ENCODE measurements at regions of chr14 and their contacts with region 1.

Region 1: DNA sequence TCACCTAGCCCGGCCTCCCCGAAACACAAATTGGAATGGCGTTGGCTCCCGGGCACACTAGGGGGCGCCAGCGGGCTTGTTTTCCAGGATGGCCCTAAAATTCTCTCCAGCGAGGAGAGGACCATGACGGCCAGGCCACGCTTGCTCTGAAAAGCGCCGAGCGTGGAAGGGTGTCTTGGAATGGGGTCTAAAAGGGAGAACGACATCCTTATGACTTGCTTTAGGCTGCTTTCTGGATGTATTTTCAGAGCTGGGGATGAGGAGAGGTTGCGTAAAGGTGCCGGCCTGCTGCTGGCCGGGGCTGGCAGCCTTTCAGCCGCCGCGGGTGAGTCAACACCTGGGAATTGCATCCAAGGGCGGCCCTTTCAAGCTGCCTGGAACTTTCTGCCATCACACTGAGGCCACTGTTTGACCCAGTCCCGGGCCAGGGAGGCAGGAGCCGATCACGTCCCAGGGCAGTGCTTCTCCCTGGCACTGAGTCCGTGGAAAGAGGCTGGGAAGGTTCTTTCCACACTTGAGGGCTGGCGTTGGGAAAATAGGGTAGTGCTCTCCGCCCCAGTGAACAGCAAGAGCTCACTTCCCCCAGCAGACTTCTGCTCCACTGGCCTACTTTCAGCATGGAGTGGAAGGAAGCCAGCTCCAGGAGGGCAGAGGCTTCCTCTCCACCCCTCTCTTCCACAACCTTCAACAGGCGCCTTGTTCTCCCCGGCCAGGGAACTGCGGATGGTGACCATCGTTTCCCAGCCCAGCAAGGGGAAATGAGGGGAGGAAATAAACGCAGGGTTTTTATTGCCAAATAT is 216.2 kb downstream of the TTC8 start:
- DNase-seq: peak; percentile 59 to 99
- H3K4me3 ChIP-seq: peak overlapping the region in 3 of 4 experiments; percentile 16 to 53 (median 22); a peak in 4 of 8 replicates
- H3K27ac ChIP-seq: no peak overlapping the region; the same call in 1 of the 2 replicates
- H3K4me1 ChIP-seq: peaks cover 0 to 10% (median 7%) of the 10 kb centered on the region in 4 experiments; a peak in 6 of 7 replicates
- H3K27me3 ChIP-seq: no peaks in the 10 kb centered on the region
- CTCF ChIP-seq: peak; percentile 85 to 91 (median 85)
- EP300 ChIP-seq: no peak
- POLR2A ChIP-seq: 0 out of 3 replicates have a peak, but pooled peaks of 1 of the 2 experiments have one; percentile 19
- RAD21 ChIP-seq: peak; percentile 94 to 97

Region 2: GRCh38 chr14:89004166-89004565 is 36.5 kb before region 1 on chr14:
- CTCF ChIA-PET with region 1: no interaction called
- POLR2A ChIA-PET with region 1: no interaction called
- DNase-seq: no peak
- H3K4me3 ChIP-seq: no peak overlapping the region
- H3K27ac ChIP-seq: no peak overlapping the region
- H3K4me1 ChIP-seq: peaks cover 0 to 3% (median 0%) of the 10 kb centered on the region in 4 experiments; a peak in 1 of 7 replicates
- H3K27me3 ChIP-seq: peaks cover 0 to 1% (median 0%) of the 10 kb centered on the region in 4 experiments; a peak in 1 of 7 replicates
- CTCF ChIP-seq: no peak
- EP300 ChIP-seq: no peak
- POLR2A ChIP-seq: no peak
- RAD21 ChIP-seq: no peak

Region 3: GRCh38 chr14:89027097-89027740 is 13.4 kb before region 1 on chr14:
- CTCF ChIA-PET with region 1: interaction called, 21 read pairs
- POLR2A ChIA-PET with region 1: interaction called, 4 read pairs
- DNase-seq: peak in 1 of 2 experiments; percentile 89
- H3K4me3 ChIP-seq: peak overlapping the region; percentile 53 to 84 (median 79)
- H3K27ac ChIP-seq: no peak overlapping the region
- H3K4me1 ChIP-seq: no peaks in the 10 kb centered on the region; a peak in 2 of 7 replicates
- H3K27me3 ChIP-seq: peaks cover 7 to 45% (median 34%) of the 10 kb centered on the region in 4 experiments
- CTCF ChIP-seq: peak; percentile 66 to 88 (median 80)
- EP300 ChIP-seq: peak in 1 of 2 experiments; percentile 28; a peak in 1 of 3 replicates
- POLR2A ChIP-seq: no peak
- RAD21 ChIP-seq: peak; percentile 82 to 92

Region 4: DNA sequence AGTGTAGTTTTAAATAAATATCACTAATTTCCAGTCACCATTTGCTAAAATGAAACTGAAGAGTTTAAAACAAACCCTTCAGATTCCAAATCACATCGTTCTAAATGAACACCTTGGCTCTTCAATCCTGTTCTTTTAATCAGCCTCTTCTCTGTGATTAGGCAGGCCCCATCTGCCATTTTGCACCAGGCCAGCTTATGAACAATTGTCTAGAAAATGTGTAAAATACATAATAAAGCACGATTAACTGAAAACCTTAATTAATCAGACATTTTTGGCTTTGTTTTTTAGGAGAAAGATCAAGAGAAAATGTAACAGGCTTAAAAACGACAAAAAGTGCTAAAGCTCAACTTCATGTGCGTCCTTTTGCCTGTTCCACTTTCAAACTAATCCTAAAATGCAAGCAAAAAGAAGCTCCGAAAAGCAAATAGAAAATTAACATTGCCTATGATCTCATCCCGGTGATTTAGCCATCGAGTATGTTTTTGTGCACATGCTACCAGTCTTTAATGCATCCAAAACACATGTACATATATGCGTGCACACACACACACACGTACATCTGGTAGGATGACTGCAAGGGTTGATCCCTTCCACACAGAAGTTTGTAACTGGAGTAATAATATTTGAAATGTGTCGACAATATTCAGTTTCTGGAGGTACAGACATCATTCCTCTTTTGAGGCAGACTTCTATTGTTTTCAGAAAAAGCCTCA is 87.8 kb after region 1 on chr14:
- CTCF ChIA-PET with region 1: no interaction called
- POLR2A ChIA-PET with region 1: no interaction called
- DNase-seq: no peak
- H3K4me3 ChIP-seq: no peak overlapping the region
- H3K27ac ChIP-seq: no peak overlapping the region
- H3K4me1 ChIP-seq: no peaks in the 10 kb centered on the region
- H3K27me3 ChIP-seq: no peaks in the 10 kb centered on the region; a peak in 2 of 7 replicates
- CTCF ChIP-seq: no peak
- EP300 ChIP-seq: no peak
- POLR2A ChIP-seq: no peak
- RAD21 ChIP-seq: no peak

Region 5: DNA sequence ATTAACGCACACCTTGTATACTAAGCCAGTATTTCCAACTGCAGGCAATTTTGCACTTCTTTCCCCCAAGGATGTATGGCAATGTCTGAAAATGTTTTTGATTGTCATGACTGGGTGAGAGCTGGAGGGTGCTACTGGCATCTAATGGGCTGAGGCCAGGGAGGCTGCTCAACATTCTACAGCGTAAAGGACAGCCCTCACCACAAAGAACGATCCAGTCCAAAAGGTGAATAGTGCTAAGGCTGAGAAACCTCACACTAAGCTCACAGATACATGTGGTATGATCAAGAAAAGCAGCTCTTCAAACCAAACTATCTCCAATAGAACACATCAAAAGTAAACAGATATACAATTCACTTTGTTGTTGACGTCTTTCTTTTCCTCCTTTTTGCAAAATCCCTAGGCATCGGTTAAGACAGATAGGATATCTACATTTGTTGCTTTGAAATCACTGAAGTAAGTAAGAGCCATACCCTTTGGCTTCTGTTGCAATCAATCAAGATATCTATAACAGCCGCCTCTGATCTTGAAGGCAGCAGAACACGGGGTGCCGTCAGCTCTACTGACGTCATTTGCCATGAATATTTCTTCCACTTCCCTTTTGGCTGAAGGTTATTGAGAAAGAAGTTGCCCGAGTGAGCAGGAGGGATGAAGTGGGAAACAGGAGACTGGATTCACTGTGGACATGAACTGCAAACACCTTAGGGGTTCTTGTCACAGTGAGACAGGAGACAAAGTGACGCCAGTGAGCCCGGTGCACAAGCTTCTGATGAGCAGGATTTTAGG is 158.1 kb after region 1 on chr14:
- CTCF ChIA-PET with region 1: interaction called, 10 read pairs
- POLR2A ChIA-PET with region 1: no interaction called
- DNase-seq: no peak
- H3K4me3 ChIP-seq: no peak overlapping the region
- H3K27ac ChIP-seq: no peak overlapping the region
- H3K4me1 ChIP-seq: peaks cover 6 to 12% (median 9%) of the 10 kb centered on the region in 4 experiments
- H3K27me3 ChIP-seq: no peaks in the 10 kb centered on the region
- CTCF ChIP-seq: no peak
- EP300 ChIP-seq: no peak
- POLR2A ChIP-seq: no peak
- RAD21 ChIP-seq: no peak